Activated CD4-positive, alpha-beta T cell treated with anti-CD3 and anti-CD28 coated beads for 36 hours (primary cell): ENCODE measurements at regions of chr14 and their contacts with region 1.

Region 1: GRCh38 chr14:35320472-35320871 is 28.3 kb downstream of the PSMA6 start:
- DNase-seq: no peak
- ATAC-seq: peak; percentile 23
- H3K4me3 Mint-ChIP-seq: no peak overlapping the region
- H3K27ac Mint-ChIP-seq: no peak overlapping the region
- H3K4me1 Mint-ChIP-seq: no peaks in the 10 kb centered on the region
- H3K27me3 Mint-ChIP-seq: no peaks in the 10 kb centered on the region

Region 2: GRCh38 chr14:35247777-35248475 is 72.5 kb before region 1 on chr14:
- CTCF ChIA-PET with region 1: no interaction called
- POLR2A ChIA-PET with region 1: no interaction called
- intact Hi-C with region 1: no loop called
- DNase-seq: no peak
- ATAC-seq: no peak
- H3K4me3 Mint-ChIP-seq: no peak overlapping the region
- H3K27ac Mint-ChIP-seq: peak overlapping the region; percentile 27
- H3K4me1 Mint-ChIP-seq: peaks cover 14% of the 10 kb centered on the region
- H3K27me3 Mint-ChIP-seq: no peaks in the 10 kb centered on the region

Region 3: GRCh38 chr14:35301735-35302528 is 18.5 kb before region 1 on chr14:
- CTCF ChIA-PET with region 1: interaction called, 8 read pairs
- POLR2A ChIA-PET with region 1: interaction called, 10 read pairs
- intact Hi-C with region 1: no loop called
- DNase-seq: no peak
- ATAC-seq: peak; percentile 77
- H3K4me3 Mint-ChIP-seq: peak overlapping the region; percentile 42
- H3K27ac Mint-ChIP-seq: peak overlapping the region; percentile 81
- H3K4me1 Mint-ChIP-seq: peaks cover 66% of the 10 kb centered on the region
- H3K27me3 Mint-ChIP-seq: no peaks in the 10 kb centered on the region

Region 4: GRCh38 chr14:35331605-35332516 is 11.4 kb after region 1 on chr14:
- CTCF ChIA-PET with region 1: interaction called, 3 read pairs
- POLR2A ChIA-PET with region 1: interaction called, 17 read pairs
- intact Hi-C with region 1: loop called (anchors 1 to 2 kb)
- DNase-seq: no peak
- ATAC-seq: no peak
- H3K4me3 Mint-ChIP-seq: no peak overlapping the region
- H3K27ac Mint-ChIP-seq: peak overlapping the region; percentile 96
- H3K4me1 Mint-ChIP-seq: peaks cover 32% of the 10 kb centered on the region
- H3K27me3 Mint-ChIP-seq: no peaks in the 10 kb centered on the region

Region 5: GRCh38 chr14:35355981-35356841 is 35.7 kb after region 1 on chr14:
- CTCF ChIA-PET with region 1: no interaction called
- POLR2A ChIA-PET with region 1: interaction called, 9 read pairs
- intact Hi-C with region 1: loop called (anchors 1 kb)
- DNase-seq: peak; percentile 79
- ATAC-seq: peak; percentile 85
- H3K4me3 Mint-ChIP-seq: peak overlapping the region; percentile 30
- H3K27ac Mint-ChIP-seq: peak overlapping the region; percentile 91
- H3K4me1 Mint-ChIP-seq: peaks cover 46% of the 10 kb centered on the region
- H3K27me3 Mint-ChIP-seq: no peaks in the 10 kb centered on the region

Region 6: DNA sequence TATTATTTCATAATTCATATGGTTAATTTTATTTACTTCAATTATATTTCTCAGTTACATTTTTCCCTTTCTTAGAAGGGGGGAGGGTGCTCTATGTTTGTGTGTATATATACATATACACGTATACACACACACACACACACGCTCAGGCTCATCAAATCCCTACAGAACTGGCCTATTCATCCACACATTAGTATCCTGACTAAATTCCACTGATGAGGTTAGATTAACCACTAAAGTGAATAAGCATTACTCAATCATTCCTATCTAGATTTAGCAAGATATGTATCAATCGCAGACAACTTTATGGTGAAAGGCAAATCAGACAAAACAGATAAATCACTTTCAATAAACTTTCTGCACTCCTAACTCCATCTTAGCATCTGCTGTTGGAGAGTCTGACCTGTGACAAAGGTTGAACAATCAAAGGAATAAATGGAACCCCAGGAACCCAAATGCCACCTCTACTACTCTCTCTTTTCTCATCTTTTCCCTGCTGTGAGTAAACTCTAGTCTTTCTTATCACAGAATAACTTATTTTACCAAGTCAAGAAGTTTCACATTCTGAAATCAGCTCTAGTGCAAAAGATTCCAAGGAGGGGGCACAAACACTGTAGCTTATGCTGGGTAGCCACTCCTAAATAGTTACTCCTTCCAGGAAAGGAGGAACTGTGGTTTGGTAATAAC is 421.0 kb after region 1 on chr14:
- CTCF ChIA-PET with region 1: no interaction called
- POLR2A ChIA-PET with region 1: no interaction called
- intact Hi-C with region 1: no loop called
- DNase-seq: no peak
- ATAC-seq: peak; percentile 68
- H3K4me3 Mint-ChIP-seq: no peak overlapping the region
- H3K27ac Mint-ChIP-seq: peak overlapping the region; percentile 37
- H3K4me1 Mint-ChIP-seq: peaks cover 13% of the 10 kb centered on the region
- H3K27me3 Mint-ChIP-seq: no peaks in the 10 kb centered on the region